ENCODE measurements at regions of chr1 and their contacts with region 1.

Region 1: DNA sequence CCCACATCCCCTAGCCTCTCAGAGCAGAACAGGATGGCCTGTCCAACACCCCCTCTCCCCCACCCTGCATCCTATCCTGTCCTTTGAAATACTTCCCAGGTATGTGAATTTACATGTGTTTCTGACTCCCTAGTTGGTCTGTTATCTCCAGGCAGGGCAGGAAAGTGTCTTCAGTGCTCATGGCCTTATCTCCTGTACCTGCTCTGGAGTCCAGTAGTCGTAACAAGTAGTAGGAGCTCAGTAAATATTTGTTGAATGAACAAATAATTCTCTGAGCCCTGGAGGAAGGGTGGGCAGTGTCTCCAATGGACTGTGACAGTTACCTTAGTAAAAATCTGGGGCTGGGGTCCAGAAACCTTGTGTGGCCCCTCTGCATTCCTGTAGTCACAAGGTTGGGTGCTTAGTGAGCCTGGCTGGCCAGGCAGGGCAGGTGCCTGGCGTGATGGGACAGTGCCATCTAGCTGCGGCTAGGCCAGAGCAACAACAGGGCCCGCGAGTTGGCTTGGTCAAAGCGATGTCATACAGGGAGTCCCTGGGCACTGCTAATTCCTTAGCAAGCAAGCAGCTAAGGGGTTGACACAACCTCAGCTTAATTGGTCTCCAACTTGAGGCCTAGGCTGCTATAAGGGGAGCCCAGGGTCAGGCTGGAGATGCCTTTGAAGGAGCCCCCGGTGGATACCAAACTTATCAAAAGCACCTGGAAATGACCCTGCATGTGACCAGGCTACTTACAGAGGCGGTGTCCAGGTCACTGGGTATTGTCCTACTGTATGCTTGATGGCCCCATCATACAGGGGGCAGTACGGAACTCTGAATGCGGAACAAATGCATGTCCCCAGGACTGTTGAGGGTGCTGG is 89.0 kb upstream of the PPM1J start:
- DNase-seq: peak; percentile 61 to 86 (median 76)
- H3K4me3 ChIP-seq: no peak overlapping the region
- H3K27ac ChIP-seq: no peak overlapping the region
- H3K27me3 ChIP-seq: no peaks in the 10 kb centered on the region
- CTCF ChIP-seq: peak; percentile 30 to 92 (median 76)

Region 2: GRCh38 chr1:112390775-112391602 is 413.1 kb before region 1 on chr1:
- intact Hi-C with region 1: loop called (anchors 5 to 10 kb)
- DNase-seq: peak; percentile 67 to 93 (median 88)
- H3K4me3 ChIP-seq: peak overlapping the region; percentile 24 to 70 (median 53)
- H3K27ac ChIP-seq: peak overlapping the region in 57 of 59 donors; percentile 7 to 93 (median 75)
- H3K27me3 ChIP-seq: no peaks in the 10 kb centered on the region
- CTCF ChIP-seq: peak; percentile 69 to 99 (median 94)

Region 3: GRCh38 chr1:112651205-112651604 is 152.9 kb before region 1 on chr1:
- intact Hi-C with region 1: no loop called
- DNase-seq: no peak
- H3K4me3 ChIP-seq: no peak overlapping the region
- H3K27ac ChIP-seq: no peak overlapping the region
- H3K27me3 ChIP-seq: no peaks in the 10 kb centered on the region
- CTCF ChIP-seq: no peak

Region 4: DNA sequence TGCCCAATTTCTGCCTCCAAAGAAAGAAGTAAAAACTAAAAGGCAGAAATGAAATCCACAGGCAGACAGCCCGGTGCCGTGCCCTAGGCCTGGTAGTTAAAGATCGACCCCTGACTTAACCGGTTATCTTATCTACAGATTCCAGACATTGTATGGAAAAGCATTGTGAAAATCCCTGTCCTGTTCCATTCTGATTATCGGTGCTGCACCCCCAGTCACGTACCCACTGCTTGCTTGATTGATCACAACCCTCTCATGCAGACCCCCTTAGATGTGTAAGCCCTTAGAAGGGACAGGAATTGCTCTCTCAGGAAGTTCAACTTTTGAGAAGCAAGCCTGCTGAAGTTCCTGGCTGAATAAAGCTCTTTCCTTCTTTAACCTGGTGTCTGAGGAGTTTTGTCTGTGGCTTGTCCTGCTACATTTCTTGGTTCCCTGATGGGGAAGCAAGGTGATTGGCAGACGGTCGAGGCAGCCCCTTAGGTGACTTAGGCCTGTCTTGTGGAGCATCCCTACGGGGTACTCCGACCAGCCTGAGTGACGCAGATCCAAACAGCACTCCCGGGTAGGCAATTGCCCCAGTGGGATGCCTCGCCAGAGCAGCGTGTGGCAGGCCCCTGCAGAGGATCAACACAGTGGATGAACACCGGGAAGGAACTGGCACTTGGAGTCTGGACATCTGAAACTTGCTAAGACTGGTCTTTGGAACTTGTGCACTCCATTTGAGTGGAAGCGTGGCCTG is 22.2 kb after region 1 on chr1:
- intact Hi-C with region 1: no loop called
- DNase-seq: no peak
- H3K4me3 ChIP-seq: no peak overlapping the region
- H3K27ac ChIP-seq: no peak overlapping the region
- H3K27me3 ChIP-seq: no peaks in the 10 kb centered on the region
- CTCF ChIP-seq: no peak

Measured in dorsolateral prefrontal cortex (tissue), 120 donors.